Dendritic cell treated with granulocyte-macrophage colony-stimulating factor and Interleukin-4, amounts not matched to agents 40 ng/mL and 50 ng/mL, for 4 days (primary cell): ENCODE measurements at regions of chr4 and their contacts with region 1.

Region 1: DNA sequence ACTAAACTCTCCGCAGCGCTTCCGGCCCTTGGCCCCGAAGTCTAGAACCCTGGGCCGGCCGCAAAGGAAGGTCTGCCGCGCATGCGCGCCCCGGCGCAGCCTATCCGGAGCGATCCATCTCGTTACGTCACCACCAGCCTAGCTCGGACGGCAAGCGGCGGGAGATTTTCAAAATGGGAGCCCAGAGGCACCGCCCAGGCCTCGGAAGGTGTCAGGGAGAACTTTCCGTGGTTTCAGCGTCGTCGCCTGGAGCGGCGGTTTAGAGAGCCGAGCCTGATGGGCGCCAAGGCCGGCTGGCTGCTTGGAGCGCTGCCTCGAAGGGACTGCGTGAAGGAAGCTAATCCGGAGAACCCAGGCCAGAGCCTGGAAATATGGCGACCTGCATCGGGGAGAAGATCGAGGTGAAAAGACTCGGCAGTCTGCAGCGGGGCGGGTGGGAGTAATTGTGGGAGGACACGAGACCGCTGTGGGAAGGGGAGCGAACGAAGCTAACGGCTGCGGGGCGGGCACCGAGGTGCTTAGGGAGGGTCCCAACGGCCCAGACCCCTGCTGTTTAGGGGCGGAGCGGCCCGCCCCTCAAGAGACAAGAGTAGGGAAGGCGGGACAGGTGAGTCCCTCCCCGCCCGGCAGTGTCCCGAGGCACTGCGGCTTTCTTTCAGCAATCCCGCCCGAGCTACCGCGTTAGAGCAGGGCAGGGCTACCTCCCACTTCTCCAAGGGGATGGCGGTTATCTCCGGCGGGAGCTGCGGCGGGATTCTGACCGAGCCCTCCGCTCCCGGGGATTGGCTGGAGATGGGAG is at the start of gene PLK4:
- H3K4me3 Mint-ChIP-seq: peak within 1 kb of the TSS; percentile 95
- H3K27ac Mint-ChIP-seq: peak within 1 kb of the TSS; percentile 91
- H3K4me1 Mint-ChIP-seq: peaks cover 12% of the 10 kb centered on the region
- H3K27me3 Mint-ChIP-seq: no peaks in the 10 kb centered on the region

Region 2: GRCh38 chr4:127632420-127633403 is 248.3 kb before region 1 on chr4 and contains the start of gene INTU:
- intact Hi-C with region 1: loop called (anchors 10 kb)
- H3K4me3 Mint-ChIP-seq: peak within 1 kb of the TSS; percentile 93
- H3K27ac Mint-ChIP-seq: peak within 1 kb of the TSS; percentile 86
- H3K4me1 Mint-ChIP-seq: peaks cover 17% of the 10 kb centered on the region
- H3K27me3 Mint-ChIP-seq: peaks cover 2% of the 10 kb centered on the region

Region 3: DNA sequence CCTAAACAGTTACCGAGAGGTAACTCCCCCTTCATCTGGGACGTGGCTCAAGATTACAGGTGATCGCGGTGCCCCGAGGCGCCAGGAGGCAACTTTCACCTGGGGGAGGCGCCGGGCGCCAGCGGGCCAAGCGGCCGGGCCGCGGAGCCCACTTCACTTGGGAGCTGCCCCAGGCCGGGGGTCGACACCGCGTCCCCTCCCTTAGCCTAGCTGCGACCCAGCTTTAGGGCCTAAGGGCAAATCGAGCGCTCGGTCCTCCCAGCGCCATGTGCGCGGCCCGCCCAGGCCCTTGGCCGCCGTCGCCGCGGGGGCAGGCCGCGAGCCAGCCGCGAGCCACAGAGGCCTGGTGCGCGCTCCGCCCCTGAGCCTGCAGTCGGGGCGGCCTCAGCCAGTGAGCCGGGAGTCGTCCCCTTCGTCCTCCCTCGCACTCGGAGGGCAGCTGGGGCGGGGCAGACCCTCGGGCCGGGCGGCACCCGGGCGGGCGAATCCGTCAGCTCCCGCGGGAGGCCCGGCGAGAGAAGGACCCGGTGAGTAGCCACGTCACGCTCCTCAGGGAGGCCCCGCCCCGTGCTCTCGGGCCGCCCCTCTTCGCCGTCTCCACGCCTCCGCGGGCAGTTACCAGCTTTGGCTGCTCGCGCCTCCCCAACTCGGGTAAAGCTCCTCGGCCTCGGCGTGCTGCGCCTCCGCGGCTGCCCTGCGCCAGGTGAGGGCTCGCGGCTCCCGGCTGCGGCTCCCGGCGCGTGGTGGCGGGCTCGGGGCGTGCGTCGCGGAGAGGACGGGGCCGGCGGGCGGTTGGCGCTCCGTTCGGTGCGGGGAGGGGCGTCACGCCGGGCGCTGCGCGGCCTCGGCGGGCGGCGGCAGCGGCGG is 180.0 kb after region 1 on chr4 and contains the start of gene LARP1B:
- intact Hi-C with region 1: loop called (anchors 2 kb)
- H3K4me3 Mint-ChIP-seq: peak within 1 kb of the TSS; percentile 78
- H3K27ac Mint-ChIP-seq: peak within 1 kb of the TSS; percentile 87
- H3K4me1 Mint-ChIP-seq: peaks cover 10% of the 10 kb centered on the region
- H3K27me3 Mint-ChIP-seq: peaks cover 2% of the 10 kb centered on the region